Calu3 (cell line): ENCODE measurements at regions of chr1 and their contacts with region 1.

Region 1: GRCh38 chr1:210170220-210170619 is 62.4 kb upstream of the SERTAD4 start:
- DNase-seq: no peak
- H3K4me3 Mint-ChIP-seq: no peak overlapping the region
- H3K27ac Mint-ChIP-seq: no peak overlapping the region
- H3K4me1 Mint-ChIP-seq: peaks cover 8% of the 10 kb centered on the region
- H3K27me3 Mint-ChIP-seq: no peaks in the 10 kb centered on the region
- CTCF ChIP-seq: no peak

Region 2: DNA sequence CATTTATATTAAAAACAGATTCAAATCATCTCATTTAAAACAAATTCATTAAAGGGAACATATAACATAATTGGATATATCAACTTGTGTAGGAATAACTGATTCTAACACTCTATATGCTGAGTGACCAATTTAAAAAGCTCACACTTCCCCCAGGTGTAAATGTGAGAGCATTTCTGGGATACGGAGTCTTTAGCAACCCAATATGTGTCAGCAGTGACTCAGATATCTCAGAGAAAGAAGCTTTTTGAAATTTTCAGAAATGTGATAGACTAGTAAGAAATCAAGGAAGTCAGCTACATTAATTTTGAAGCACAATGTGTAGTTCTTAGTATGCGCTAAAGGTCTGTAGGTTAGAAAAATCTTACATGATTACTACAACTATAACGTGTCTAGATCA is 25.5 kb before region 1 on chr1:
- CTCF ChIA-PET with region 1: no interaction called
- intact Hi-C with region 1: no loop called
- DNase-seq: no peak
- H3K4me3 Mint-ChIP-seq: no peak overlapping the region
- H3K27ac Mint-ChIP-seq: no peak overlapping the region
- H3K4me1 Mint-ChIP-seq: no peaks in the 10 kb centered on the region
- H3K27me3 Mint-ChIP-seq: no peaks in the 10 kb centered on the region
- CTCF ChIP-seq: no peak

Region 3: DNA sequence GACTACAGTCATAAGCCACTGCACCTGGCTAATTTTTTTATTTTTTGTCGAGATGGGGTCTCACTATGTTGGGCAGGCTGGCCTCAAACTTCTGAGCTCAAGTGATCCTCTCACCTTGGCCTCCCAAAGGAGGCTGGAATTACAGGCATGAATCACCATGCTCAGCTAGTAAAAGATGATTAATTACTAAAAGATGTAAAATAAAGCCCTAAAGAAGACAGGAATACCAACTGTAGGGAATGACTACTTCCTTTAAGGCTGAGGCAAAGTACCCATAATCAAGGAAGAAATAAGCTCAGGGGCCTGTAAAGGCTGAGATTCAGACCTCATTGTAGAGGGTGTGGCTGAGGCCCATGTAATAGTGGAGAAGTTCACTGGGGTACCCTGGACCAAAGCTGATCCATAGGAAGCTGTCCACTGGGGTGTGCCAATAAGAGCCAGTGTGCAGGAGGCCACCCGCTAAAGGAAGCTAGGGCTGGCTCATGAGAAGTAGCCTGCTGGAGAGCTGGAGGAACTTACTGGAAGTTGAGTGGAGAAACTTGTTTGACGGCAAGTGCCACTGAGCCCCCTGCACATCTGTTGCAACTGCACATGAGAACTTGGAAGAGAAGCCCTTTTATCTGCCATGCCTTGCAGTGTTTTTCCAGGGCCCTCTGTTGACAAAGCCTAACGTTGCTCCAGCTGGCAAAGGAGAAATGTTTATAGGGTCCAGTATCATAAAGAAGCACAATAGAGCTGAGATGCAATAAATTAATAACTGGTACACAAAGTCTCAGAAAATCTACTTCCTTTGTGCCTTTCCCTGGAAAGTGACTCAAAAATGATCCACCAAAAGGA is 44.6 kb after region 1 on chr1:
- CTCF ChIA-PET with region 1: interaction called, 3 read pairs
- intact Hi-C with region 1: loop called (anchors 1 kb)
- DNase-seq: no peak
- H3K4me3 Mint-ChIP-seq: no peak overlapping the region
- H3K27ac Mint-ChIP-seq: no peak overlapping the region
- H3K4me1 Mint-ChIP-seq: no peaks in the 10 kb centered on the region
- H3K27me3 Mint-ChIP-seq: no peaks in the 10 kb centered on the region
- CTCF ChIP-seq: no peak